Common myeloid progenitor, CD34-positive (primary cell): ENCODE measurements at regions of chr11 and their contacts with region 1.

Region 1: GRCh38 chr11:65569973-65570918 is at the start of gene ZNRD2:
- DNase-seq: peak; percentile 99 to 100 (median 99)
- H3K4me3 ChIP-seq: peak within 1 kb of the TSS; percentile 76 to 99 (median 91)
- H3K27ac ChIP-seq: peak within 1 kb of the TSS; percentile 81 to 91
- H3K4me1 ChIP-seq: peaks cover 18 to 73% (median 64%) of the 10 kb centered on the region in 4 experiments
- H3K27me3 ChIP-seq: no peaks in the 10 kb centered on the region

Region 2: DNA sequence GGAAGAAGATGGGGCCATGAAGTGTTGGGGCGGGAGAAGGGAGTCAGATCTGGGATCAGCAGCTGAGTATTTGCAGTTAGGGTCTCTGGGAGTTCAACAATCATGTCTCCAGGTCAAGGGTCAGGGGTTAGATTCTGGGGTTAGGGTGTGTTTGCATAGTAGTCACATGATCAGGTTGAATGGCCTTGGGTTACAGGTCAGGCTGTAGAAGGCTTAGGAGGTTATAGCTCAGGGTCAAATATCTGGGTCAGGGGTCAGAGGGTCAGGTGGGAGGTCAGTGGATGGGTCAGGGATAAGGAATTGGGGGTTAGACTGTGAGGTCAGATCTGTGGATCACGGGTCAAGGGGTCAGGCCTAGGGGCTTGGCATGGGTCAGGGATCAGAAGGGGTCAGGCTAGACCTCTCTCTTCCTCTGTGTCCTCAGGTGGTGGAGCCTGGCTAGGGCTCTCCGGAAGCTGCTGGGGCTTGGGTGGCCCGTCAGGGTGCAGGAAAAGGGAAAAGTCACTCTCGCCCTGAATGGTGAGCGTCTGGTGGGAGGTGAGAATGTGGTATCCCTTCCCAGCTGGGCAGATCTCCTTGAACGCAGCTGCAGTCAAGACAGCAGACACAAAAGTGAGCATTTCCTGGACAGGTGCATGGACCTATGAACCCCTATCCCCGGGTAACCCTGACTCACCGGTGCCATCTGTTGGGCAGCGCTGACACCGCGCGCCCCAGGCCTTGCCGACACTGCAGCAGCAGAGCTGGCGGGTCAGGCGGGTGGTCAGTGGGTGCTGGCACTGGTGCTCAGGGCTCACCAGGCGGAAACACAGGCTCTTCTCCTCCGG is 18.5 kb before region 1 on chr11:
- CTCF ChIA-PET with region 1: interaction called, 262 read pairs
- POLR2A ChIA-PET with region 1: interaction called, 3 read pairs
- DNase-seq: peak; percentile 49 to 87 (median 81)
- H3K4me3 ChIP-seq: no peak overlapping the region
- H3K27ac ChIP-seq: no peak overlapping the region
- H3K4me1 ChIP-seq: peaks cover 2 to 78% (median 71%) of the 10 kb centered on the region in 4 experiments
- H3K27me3 ChIP-seq: no peaks in the 10 kb centered on the region

Region 3: GRCh38 chr11:65558002-65558931 is 12.0 kb before region 1 on chr11 and contains the start of gene LTBP3:
- CTCF ChIA-PET with region 1: interaction called, 23 read pairs
- POLR2A ChIA-PET with region 1: interaction called, 4 read pairs
- DNase-seq: peak in 2 of 3 donors; percentile 45 to 50
- H3K4me3 ChIP-seq: peak within 1 kb of the TSS; percentile 51 to 81 (median 62)
- H3K27ac ChIP-seq: peak within 1 kb of the TSS; percentile 54 to 76
- H3K4me1 ChIP-seq: peaks cover 0 to 69% (median 62%) of the 10 kb centered on the region in 4 experiments
- H3K27me3 ChIP-seq: no peaks in the 10 kb centered on the region

Region 4: GRCh38 chr11:65588199-65589054 is 18.2 kb after region 1 on chr11:
- CTCF ChIA-PET with region 1: interaction called, 170 read pairs
- POLR2A ChIA-PET with region 1: interaction called, 32 read pairs
- DNase-seq: peak; percentile 76 to 85 (median 85)
- H3K4me3 ChIP-seq: peak overlapping the region in 3 of 7 experiments; percentile 25 to 44 (median 38)
- H3K27ac ChIP-seq: peak overlapping the region in 1 of 2 experiments; percentile 49
- H3K4me1 ChIP-seq: peaks cover 0 to 37% (median 28%) of the 10 kb centered on the region in 4 experiments
- H3K27me3 ChIP-seq: no peaks in the 10 kb centered on the region